ENCODE measurements at regions of chr4 and their contacts with region 1.

Region 1: GRCh38 chr4:83252782-83253405 is 31.7 kb downstream of the COQ2 start:
- DNase-seq: peak; percentile 89
- H3K4me3 ChIP-seq: no peak overlapping the region
- H3K27ac ChIP-seq: peak overlapping the region in 3 of 4 donors; percentile 1 to 43 (median 9)
- H3K4me1 ChIP-seq: peaks cover 5 to 52% (median 38%) of the 10 kb centered on the region in 4 donors
- H3K27me3 ChIP-seq: no peaks in the 10 kb centered on the region
- CTCF ChIP-seq: peak; percentile 61 to 86 (median 75)
- EP300 ChIP-seq: no peak
- POLR2A ChIP-seq: no peak

Region 2: DNA sequence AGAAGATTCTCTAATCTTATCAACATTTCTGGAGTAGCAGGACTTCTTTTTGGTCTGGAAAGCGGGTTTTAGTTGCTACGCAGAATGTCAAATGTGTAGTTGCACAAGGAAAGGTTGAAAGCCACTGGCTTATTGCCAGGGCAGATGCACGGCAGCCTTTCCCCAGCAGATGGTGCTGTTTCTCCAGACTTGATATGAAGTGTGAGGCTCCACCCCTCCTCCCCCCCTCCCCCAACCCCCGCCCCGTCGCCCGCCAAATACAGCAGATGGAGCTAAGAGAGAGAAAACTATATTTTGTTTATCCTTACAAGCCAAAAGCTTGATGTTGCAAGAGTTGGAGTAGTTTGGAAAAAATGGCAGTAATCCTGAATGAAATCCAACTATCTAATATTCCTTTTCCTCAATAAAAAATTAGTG is 790.5 kb before region 1 on chr4:
- in situ Hi-C with region 1: loop called in 3 of 4 experiments (anchors 25 kb)
- intact Hi-C with region 1: no loop called
- DNase-seq: peak; percentile 90
- H3K4me3 ChIP-seq: no peak overlapping the region
- H3K27ac ChIP-seq: peak overlapping the region in 1 of 4 donors; percentile 27
- H3K4me1 ChIP-seq: peaks cover 0 to 7% (median 3%) of the 10 kb centered on the region in 4 donors
- H3K27me3 ChIP-seq: no peaks in the 10 kb centered on the region
- CTCF ChIP-seq: peak; percentile 54 to 92 (median 84)
- EP300 ChIP-seq: no peak
- POLR2A ChIP-seq: no peak

Region 3: DNA sequence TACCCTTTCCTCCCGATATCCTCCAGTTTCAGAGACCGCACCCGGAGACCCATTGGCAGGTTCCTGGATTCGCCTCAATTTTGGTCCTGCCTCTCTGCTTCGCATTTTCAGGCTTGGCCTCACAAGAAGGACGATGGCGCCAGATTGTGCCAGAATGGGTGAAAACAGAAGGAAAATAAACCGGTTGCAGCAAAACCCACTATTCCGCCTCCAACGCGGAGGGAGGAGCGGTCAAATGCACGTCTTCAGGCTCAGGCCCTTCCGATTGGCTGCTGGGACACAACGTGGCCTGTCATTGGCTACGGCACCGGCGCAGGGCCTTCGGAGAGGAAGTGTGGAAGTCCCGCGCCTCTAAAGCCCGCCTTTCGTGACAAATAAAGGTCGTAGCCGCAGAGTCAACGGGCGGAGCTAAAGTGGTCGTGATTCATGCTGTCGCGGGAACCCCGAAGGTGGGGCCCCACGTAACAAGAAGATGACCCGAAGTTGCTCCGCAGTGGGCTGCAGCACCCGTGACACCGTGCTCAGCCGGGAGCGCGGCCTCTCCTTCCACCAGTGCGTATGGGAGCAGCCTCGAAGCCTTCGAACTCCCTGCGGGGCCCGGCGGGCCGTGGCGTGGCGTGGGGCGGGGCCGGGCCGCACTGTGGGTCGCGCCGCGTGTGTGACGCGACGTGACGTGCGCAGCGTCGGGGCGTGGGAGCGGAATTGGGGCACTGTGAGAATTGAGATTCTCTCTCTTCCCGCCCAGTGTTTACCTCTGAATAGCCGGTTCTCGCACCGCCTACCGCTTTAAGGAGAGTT is 352.4 kb before region 1 on chr4 and contains the start of gene THAP9:
- in situ Hi-C with region 1: loop called in 1 of 4 experiments (anchors 25 kb)
- intact Hi-C with region 1: no loop called
- DNase-seq: peak; percentile 98
- H3K4me3 ChIP-seq: peak within 1 kb of the TSS; percentile 57 to 82 (median 68)
- H3K27ac ChIP-seq: peak within 1 kb of the TSS; percentile 95 to 99 (median 98)
- H3K4me1 ChIP-seq: peaks cover 15 to 30% (median 22%) of the 10 kb centered on the region in 4 donors
- H3K27me3 ChIP-seq: no peaks in the 10 kb centered on the region
- CTCF ChIP-seq: no peak
- EP300 ChIP-seq: no peak
- POLR2A ChIP-seq: peak; percentile 94
- total RNA-seq, gene THAP9: 3.7 to 7.3 (median 5.6) TPM

Region 4: GRCh38 chr4:83074086-83074704 is 178.7 kb before region 1 on chr4:
- in situ Hi-C with region 1: loop called in 2 of 4 experiments (anchors 10 to 25 kb)
- intact Hi-C with region 1: no loop called
- DNase-seq: peak; percentile 30
- H3K4me3 ChIP-seq: no peak overlapping the region
- H3K27ac ChIP-seq: peak overlapping the region in 1 of 4 donors; percentile 66
- H3K4me1 ChIP-seq: peaks cover 0 to 32% (median 4%) of the 10 kb centered on the region in 4 donors
- H3K27me3 ChIP-seq: no peaks in the 10 kb centered on the region
- CTCF ChIP-seq: peak; percentile 66 to 85 (median 75)
- EP300 ChIP-seq: no peak
- POLR2A ChIP-seq: no peak

Region 5: DNA sequence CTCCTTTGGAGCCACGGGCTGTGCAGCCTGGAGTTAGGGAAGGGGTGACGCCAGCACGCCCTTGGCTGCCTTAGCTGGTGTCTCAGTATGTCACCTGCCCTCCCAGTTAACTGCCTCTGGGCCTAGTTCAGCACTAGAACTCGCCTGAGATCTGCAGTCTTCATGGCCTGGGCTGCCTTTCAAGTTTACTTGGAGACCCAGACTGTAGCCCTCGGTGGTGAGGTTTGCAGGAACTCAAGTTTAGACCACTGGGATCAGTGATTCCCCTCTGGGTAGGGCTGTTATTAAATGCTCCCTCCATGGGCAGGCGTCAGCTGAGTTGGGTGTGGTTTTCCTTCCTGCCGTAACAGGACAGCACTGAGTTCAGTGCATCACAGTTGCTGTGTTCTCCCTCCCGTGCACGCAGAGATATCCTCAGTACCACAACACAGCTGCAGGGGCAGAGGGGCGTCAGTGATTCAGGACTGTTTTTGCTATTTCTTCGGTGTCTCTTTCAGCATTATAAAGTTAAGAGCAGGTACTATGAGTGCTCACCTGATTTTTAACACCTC is 168.9 kb before region 1 on chr4:
- in situ Hi-C with region 1: loop called in 3 of 4 experiments (anchors 10 to 25 kb)
- intact Hi-C with region 1: no loop called
- DNase-seq: peak; percentile 32
- H3K4me3 ChIP-seq: no peak overlapping the region
- H3K27ac ChIP-seq: no peak overlapping the region
- H3K4me1 ChIP-seq: no peaks in the 10 kb centered on the region
- H3K27me3 ChIP-seq: no peaks in the 10 kb centered on the region
- CTCF ChIP-seq: no peak
- EP300 ChIP-seq: no peak
- POLR2A ChIP-seq: peak; percentile 23